Activated T-helper 1 cell treated with anti-CD3 and anti-CD28 coated beads, Interleukin-12 subunit alpha, Interleukin-12 subunit beta, Interleukin-2, Interleukin-4 antibody, amounts not matched to agents 30 ng/mL and 10 ng/mL and 1 ng/mL, durations not matched to agents 14 hours and 24 hours and 36 hours (primary cell): ENCODE measurements at regions of chr11 and their contacts with region 1.

Region 1: GRCh38 chr11:35207471-35208403 is 68.8 kb downstream of the CD44 start:
- DNase-seq: no peak
- H3K4me3 Mint-ChIP-seq: no peak overlapping the region
- H3K27ac Mint-ChIP-seq: no peak overlapping the region
- H3K4me1 Mint-ChIP-seq: peaks cover 11% of the 10 kb centered on the region
- H3K27me3 Mint-ChIP-seq: no peaks in the 10 kb centered on the region

Region 2: GRCh38 chr11:34809191-34810106 is 398.3 kb before region 1 on chr11:
- intact Hi-C with region 1: no loop called
- DNase-seq: no peak
- H3K4me3 Mint-ChIP-seq: no peak overlapping the region
- H3K27ac Mint-ChIP-seq: no peak overlapping the region
- H3K4me1 Mint-ChIP-seq: peaks cover 12% of the 10 kb centered on the region
- H3K27me3 Mint-ChIP-seq: peaks cover 6% of the 10 kb centered on the region

Region 3: GRCh38 chr11:35111161-35112055 is 96.3 kb before region 1 on chr11:
- intact Hi-C with region 1: no loop called
- DNase-seq: no peak
- H3K4me3 Mint-ChIP-seq: no peak overlapping the region
- H3K27ac Mint-ChIP-seq: peak overlapping the region; percentile 35
- H3K4me1 Mint-ChIP-seq: peaks cover 40% of the 10 kb centered on the region
- H3K27me3 Mint-ChIP-seq: peaks cover 8% of the 10 kb centered on the region

Region 4: DNA sequence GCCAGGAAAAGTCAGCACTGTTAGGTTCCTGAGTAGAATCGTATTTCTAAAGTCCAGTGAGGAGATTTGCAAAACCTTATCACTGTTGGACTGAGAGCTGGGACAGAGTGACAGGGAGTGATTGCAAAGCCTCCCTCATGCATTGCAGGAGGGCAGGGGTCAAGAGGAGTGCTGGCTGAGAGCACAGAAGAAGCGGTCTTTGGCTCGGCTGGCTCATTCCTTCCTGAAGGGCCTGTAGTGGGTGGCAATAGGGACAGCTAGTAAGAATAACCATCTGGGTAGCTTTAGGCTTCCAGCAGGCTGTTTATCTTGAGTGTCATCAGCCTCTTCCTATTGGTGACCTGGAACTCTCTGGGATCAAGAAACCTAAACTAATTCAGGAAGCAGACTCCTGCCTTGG is 15.4 kb before region 1 on chr11:
- intact Hi-C with region 1: loop called (anchors 2 kb)
- DNase-seq: no peak
- H3K4me3 Mint-ChIP-seq: no peak overlapping the region
- H3K27ac Mint-ChIP-seq: no peak overlapping the region
- H3K4me1 Mint-ChIP-seq: peaks cover 69% of the 10 kb centered on the region
- H3K27me3 Mint-ChIP-seq: no peaks in the 10 kb centered on the region